ENCODE measurements at regions of chr15 and their contacts with region 1.

Region 1: GRCh38 chr15:40941528-40942336 is 11.5 kb upstream of the CHAC1 start:
- DNase-seq: no peak
- H3K4me3 ChIP-seq: peak overlapping the region; percentile 59
- CTCF ChIP-seq: peak; percentile 39

Region 2: GRCh38 chr15:40906091-40906990 is 35.4 kb before region 1 on chr15:
- CTCF ChIA-PET with region 1: interaction called, 53 read pairs
- POLR2A ChIA-PET with region 1: interaction called, 6 read pairs
- DNase-seq: peak; percentile 65
- H3K4me3 ChIP-seq: peak overlapping the region; percentile 41
- CTCF ChIP-seq: peak; percentile 87

Region 3: GRCh38 chr15:40928821-40929659 is 12.7 kb before region 1 on chr15 and contains the start of gene DLL4:
- CTCF ChIA-PET with region 1: interaction called, 78 read pairs
- POLR2A ChIA-PET with region 1: no interaction called
- DNase-seq: no peak
- H3K4me3 ChIP-seq: peak within 1 kb of the TSS; percentile 48
- CTCF ChIP-seq: no peak

Region 4: GRCh38 chr15:40968290-40969085 is 26.8 kb after region 1 on chr15:
- CTCF ChIA-PET with region 1: interaction called, 25 read pairs
- POLR2A ChIA-PET with region 1: no interaction called
- DNase-seq: no peak
- H3K4me3 ChIP-seq: no peak overlapping the region
- CTCF ChIP-seq: no peak

Region 5: DNA sequence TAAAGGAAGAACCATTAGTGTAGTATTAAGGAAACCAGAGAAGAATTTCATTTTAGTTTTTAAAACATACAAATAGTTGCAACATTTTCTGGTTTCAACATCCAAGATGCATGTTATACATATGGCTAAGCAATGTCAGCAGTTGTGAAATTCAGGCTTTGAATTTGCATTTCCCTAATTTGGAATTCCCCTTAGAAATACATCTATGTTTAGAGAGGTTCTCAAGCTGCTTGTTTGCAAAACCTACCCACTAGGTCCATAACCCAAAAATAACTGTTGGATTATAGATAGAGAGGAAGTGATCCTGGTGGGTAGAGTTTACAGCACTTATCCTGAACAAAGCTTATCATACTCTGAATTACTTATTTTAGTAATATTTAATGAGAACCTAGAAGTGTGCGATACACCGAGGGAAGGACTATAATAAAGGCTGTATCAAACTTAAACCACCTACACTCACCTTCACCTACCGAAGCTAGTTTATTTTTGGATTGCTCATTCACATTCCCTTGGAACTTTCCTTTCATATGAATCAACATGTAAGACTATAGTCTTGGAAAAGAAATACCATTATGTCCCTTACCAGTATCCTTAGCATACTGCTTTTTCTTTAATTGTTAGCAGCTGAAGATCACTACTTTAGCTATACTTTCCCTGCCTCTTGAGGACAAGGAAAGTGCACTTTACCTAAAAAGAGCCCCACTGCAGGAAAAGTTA is 72.1 kb after region 1 on chr15:
- CTCF ChIA-PET with region 1: interaction called, 179 read pairs
- POLR2A ChIA-PET with region 1: no interaction called
- DNase-seq: peak; percentile 44
- H3K4me3 ChIP-seq: no peak overlapping the region
- CTCF ChIP-seq: no peak

Measured in AG04449 (cell line).